Cardiac septum (tissue), 1 donor: ENCODE measurements at regions of chrX and their contacts with region 1.

Region 1: DNA sequence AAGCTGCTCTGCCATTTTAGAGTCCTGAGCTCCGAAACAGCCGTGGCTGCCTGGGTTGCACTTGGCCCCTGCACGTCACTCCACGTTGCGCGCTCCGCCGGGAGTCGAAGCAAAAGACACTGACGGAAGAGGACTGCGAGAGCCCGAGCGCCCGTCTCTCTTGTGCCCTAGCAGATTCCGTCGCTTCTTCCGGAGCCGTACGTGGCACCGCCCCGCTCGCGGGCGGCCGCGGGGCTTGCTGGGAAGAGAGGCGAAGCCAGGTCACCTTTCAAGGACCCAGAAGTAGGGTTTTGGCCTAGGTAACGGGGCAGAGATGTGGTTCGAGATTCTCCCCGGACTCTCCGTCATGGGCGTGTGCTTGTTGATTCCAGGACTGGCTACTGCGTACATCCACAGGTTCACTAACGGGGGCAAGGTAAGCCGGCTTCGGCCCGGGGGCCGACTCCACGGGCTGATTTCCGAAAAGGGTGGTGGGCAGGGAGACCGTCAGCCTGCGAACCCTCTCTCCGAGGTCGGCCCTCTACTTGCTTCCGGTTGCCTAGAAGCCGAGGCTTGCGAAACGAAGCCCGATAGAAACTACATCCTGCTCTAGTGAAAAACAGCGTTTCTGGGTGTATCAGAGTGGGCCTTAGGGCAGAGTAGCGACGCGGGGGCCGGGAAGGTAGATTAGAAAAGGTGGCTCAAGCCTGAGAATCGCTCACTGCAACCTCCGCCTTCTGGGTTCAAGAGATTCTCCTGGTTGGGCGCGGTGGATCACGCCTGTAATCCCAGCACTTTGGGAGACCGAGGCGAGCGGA is at the starts of genes NDUFA1 and RNF113A:
- DNase-seq: peak; percentile 94
- total RNA-seq, gene NDUFA1: 424 TPM
- total RNA-seq, gene RNF113A: 7.6 TPM

Region 2: GRCh38 chrX:119791438-119792231 is 80.2 kb before region 1 on chrX and contains the start of gene RPL39:
- intact Hi-C with region 1: loop called (anchors 5 kb)
- DNase-seq: peak; percentile 91
- total RNA-seq, gene RPL39: 733 TPM

Region 3: DNA sequence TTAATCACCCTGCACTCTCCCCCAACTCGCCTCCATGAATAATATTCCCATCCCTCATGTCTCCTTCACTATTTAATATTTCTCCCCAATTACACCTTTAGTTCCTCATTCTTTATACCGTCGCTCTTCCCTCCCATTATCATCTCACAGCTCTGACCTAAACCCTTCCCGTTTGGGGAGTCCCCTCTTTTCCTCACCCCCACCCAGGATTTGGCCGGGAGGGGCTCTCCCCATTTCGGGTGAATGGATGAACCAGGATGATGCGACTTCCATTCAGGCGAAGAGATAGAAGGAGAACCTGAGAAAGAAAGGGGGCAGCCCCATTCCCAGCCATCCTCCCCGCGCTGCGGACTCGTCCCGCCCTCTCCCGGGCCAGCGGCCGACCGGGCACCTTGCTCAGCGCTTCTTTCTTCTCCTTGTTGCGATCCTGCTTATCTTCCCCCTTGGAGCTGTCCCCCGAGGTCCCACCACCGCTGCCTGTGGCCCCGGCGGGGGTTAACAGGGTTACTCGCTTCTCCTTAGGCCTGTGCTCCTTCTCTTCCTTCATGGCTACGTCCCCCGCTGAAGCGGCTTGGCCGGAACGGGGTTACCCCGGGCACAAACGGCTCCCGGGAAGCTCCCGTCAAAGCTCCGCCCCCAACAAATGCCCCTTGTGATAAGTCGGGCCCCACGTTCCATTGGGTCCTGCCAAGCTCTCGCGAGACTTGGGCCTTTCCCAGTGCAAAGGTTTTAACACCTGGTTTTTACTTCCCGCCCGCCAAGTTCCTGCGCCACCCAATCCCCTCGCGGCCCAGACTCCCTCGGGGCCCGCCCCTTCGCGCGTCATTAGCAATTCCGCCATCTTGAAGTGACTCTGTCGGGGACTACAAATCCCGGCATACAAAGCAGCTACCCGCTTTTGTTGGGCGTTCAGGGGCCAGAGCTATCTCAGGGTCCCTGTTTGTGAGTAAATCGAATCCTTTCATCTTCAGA is 19.1 kb before region 1 on chrX and contains the start of gene UPF3B:
- intact Hi-C with region 1: loop called (anchors 1 kb)
- DNase-seq: peak; percentile 96
- total RNA-seq, gene UPF3B: 2.9 TPM